ENCODE measurements at regions of chr11 and their contacts with region 1.

Region 1: DNA sequence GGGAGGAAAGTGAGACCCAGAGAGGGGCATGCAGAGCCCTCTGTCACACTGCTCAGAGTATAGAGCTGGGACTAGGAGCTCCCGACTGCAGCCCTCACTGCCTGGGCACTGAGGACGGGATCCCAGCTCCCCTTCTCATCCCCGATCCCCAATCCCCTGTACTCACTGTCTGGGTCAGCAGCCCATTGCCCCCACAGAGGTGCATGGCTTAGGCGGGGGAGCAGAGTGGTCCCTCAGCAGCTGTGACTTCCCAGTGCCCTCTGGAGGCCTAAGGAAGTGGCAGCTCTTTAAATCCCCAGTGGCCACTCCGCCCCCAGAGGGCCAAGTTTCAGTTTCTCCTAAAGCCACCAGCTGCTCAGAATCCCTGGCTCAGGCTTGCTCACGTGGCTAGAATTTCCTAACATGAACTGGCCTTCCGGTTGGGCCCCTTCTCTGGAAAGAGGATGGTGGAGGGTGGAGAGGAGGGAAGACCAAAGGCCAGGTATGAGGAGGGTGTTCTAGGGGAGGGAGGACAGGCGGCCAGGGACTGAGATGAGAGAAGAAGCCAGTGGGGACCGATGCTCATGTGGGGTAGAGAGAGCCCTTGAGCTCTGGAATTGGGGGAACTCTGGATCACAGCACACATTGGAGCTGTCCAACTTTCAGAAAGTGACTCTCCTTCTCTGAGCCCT is at the start of gene BATF2:
- DNase-seq: peak; percentile 33
- ATAC-seq: peak; percentile 88
- H3K4me3 Mint-ChIP-seq: peak within 1 kb of the TSS; percentile 70
- H3K27ac Mint-ChIP-seq: peak within 1 kb of the TSS; percentile 66
- H3K4me1 Mint-ChIP-seq: peaks cover 20% of the 10 kb centered on the region
- H3K27me3 Mint-ChIP-seq: no peaks in the 10 kb centered on the region
- CTCF ChIP-seq: no peak
- total RNA-seq, gene BATF2: 0.07 and 0.24 TPM in 2 replicates

Region 2: DNA sequence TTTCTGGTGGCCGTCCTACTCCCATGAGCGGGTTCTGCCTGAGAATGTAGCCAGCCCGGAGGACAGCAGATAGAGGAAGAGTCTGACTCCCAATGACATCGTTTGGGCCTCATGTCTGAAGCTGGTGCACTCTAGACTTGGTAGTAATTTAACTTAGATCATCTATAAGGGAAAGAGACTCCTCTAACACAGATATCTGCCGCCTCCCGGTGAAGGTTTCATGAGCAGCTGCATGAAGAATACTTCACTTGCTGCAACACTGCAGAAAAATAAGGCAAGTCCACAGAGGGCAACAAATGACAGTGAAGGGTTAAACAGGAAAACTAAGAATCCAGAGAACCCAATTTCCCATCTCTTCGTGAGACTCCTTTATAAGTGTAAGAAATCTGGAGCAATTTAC is 11.2 kb after region 1 on chr11:
- CTCF ChIA-PET with region 1: interaction called, 12 read pairs
- POLR2A ChIA-PET with region 1: interaction called, 11 read pairs
- intact Hi-C with region 1: no loop called
- DNase-seq: no peak
- ATAC-seq: no peak
- H3K4me3 Mint-ChIP-seq: no peak overlapping the region
- H3K27ac Mint-ChIP-seq: no peak overlapping the region
- H3K4me1 Mint-ChIP-seq: peaks cover 3% of the 10 kb centered on the region
- H3K27me3 Mint-ChIP-seq: no peaks in the 10 kb centered on the region
- CTCF ChIP-seq: no peak